Pancreas (tissue), 10 donors: ENCODE measurements at regions of chr22 and their contacts with region 1.

Region 1: DNA sequence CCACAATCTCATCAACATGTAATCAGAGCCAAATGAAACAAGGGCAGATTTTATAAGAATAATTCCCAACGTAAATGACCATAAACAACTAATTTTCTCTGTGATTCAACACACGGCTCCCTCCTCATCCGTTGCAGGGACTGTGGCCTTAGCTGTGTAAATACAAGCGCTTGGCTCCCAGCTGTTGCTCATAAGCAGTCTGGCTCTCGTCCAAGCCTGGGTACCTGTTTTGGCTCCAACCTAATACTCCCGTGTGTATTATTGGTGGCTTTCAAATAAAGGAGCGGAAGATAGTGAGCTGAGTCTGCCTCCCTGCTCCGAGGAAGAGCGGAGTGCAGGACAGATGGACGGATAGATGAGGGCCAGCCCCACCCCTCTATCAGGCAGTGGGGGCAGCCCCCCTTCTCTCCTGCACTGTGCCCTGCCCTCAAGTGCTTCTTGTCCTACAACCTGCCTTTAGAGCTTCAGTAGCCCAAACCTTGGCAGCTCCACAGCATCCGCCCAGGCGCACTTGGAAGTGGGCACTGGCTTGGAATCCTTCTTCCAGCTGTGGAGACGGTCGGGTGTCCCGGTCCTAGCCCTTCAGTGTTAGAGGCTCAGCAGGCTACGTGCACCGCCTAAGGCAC is 670.9 kb downstream of the BRD1 start:
- DNase-seq: peak in 5 of 6 donors; percentile 33 to 79 (median 63)
- ATAC-seq: peak in 3 of 4 donors; percentile 74 to 87 (median 86)
- H3K4me3 ChIP-seq: no peak overlapping the region
- H3K27ac ChIP-seq: no peak overlapping the region
- H3K4me1 ChIP-seq: no peaks in the 10 kb centered on the region
- H3K27me3 ChIP-seq: no peaks in the 10 kb centered on the region
- CTCF ChIP-seq: no peak

Region 2: DNA sequence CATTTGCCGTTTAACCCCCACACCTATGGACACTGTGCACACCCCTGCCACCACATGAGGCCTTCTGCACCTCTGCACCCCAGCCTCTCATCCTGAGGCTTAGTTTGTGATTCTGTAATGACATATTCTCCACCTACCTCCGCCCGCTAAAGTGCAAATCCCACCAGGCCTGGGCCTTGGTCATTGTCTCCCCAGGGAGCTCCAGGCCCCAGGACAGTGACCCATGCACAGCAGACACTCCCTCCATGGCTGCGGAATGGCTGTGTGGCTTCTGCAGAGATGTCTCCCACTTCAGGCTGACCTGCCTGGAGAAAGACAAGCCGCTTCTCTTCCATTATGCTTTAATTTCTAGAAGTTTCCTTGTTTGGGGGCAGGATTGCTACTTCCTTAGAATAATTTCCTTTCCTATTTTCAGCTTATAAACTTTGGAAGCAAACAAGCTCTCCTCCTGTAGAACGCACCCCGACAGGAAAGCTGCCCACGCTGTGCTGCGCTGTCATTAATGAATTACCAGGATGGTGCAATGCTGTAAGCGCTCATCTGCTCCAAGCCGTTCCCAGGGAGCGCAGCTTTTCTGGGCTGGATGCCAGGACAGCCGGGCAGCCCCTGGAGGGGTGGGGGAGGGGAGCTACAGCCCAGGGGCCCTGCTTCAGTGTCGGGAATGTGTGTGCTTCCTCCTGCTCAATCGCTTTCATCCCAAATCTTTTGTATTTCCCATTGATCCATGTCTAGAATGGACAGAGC is 52.9 kb after region 1 on chr22:
- intact Hi-C with region 1: loop called in 1 of 3 experiments (anchors 10 kb)
- DNase-seq: peak in 3 of 6 donors; percentile 42 to 64 (median 58)
- ATAC-seq: peak in 3 of 4 donors; percentile 63 to 86 (median 81)
- H3K4me3 ChIP-seq: no peak overlapping the region
- H3K27ac ChIP-seq: no peak overlapping the region
- H3K4me1 ChIP-seq: no peaks in the 10 kb centered on the region
- H3K27me3 ChIP-seq: no peaks in the 10 kb centered on the region
- CTCF ChIP-seq: no peak